Sciatic nerve (tissue), 2 donors: ENCODE measurements at regions of chr6 and their contacts with region 1.

Region 1: DNA sequence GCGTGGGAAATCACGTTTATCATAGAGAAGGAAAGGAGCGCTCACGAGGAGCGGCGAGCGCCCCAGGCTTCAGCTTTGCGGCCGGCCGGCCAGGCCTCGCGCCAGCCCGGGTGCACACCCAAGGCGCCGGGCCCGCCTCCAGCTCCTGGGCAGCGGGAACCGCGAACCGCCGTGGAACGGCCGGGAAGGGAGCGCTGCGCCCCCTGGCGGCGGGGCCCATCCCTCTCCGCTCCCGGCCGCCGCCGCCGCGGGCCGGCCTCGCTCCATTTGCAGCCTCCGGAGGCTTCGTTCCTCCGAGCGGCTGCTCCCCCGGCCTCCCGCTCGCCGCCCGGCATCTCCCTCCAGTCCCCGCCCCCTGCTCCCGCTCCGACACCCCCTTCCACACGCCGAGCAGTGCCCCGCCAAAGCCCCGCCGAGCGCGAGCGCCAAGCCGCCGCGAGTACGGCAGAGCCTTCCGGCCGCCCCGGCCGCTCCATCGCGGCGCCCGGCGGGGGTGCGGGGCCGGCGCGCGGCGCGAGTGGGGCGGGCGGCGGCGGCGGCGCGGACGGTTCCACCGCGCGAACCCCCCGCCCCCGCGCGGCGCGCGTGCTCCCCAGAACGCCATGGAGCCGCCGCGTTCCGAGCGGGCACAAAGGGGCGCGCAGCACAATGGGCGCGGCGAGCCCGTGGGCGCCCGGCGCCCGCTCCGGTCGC is 956 bp downstream of the BEND3 start:
- DNase-seq: peak; percentile 92
- ATAC-seq: peak; percentile 93

Region 2: DNA sequence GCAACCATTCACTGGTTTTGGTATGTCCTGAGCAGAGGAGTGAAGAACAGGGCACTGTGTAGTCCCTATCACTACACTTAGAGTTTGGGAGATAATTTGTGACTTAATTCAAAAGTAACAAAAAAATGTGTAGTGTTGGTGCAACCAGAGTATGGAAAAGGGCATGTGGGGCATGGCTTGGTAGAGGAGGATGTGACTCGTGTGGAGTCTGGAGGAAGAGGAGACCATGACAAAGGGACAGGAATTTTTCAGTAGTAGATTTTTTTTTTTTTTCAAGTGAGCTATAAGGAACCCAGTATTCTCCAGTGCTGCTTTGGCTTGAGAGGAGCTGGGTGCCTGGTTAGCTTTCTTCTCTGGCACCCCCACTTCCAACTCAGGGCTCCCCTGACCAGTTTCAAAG is 81.2 kb before region 1 on chr6:
- intact Hi-C with region 1: loop called (anchors 10 kb)
- DNase-seq: no peak
- ATAC-seq: no peak

Region 3: GRCh38 chr6:107293350-107293749 is 179.0 kb after region 1 on chr6:
- intact Hi-C with region 1: no loop called
- DNase-seq: no peak
- ATAC-seq: no peak